Ascending aorta (tissue), 2 donors: ENCODE measurements at regions of chr9 and their contacts with region 1.

Region 1: GRCh38 chr9:17810728-17811571 is 232.1 kb downstream of the SH3GL2 start:
- DNase-seq: peak in 1 of 2 donors; percentile 68
- H3K4me3 ChIP-seq: no peak overlapping the region
- H3K27ac ChIP-seq: no peak overlapping the region
- H3K4me1 ChIP-seq: no peaks in the 10 kb centered on the region
- H3K27me3 ChIP-seq: no peaks in the 10 kb centered on the region
- CTCF ChIP-seq: peak; percentile 66 to 91 (median 88)

Region 2: GRCh38 chr9:17906176-17906840 is 95.4 kb after region 1 on chr9:
- intact Hi-C with region 1: loop called (anchors 5 kb)
- DNase-seq: peak in 1 of 2 donors; percentile 65
- H3K4me3 ChIP-seq: peak overlapping the region; percentile 62 to 78
- H3K27ac ChIP-seq: peak overlapping the region; percentile 88 to 95
- H3K4me1 ChIP-seq: peaks cover 4% of the 10 kb centered on the region in 2 donors
- H3K27me3 ChIP-seq: no peaks in the 10 kb centered on the region
- CTCF ChIP-seq: no peak

Region 3: DNA sequence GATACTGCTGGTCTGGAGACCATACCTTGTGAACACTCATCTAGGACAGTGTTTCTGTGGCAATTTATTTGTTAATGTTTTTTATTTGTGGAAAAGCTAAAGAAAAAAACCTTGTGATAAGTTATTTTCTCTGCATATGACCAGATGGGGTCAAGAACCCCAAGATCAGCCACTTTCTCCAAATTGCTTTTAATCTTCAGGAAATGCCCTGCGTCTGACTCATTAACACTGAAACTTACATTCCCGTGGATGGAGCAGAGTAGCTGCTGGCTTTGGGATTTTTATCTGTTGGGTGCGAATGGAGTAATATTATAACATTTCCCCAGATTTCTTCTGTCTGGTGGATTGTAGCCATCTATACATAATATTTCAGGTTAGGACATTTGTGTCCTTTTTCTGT is 212.4 kb after region 1 on chr9:
- intact Hi-C with region 1: loop called (anchors 10 kb)
- DNase-seq: no peak
- H3K4me3 ChIP-seq: no peak overlapping the region
- H3K27ac ChIP-seq: peak overlapping the region; percentile 41 to 44
- H3K4me1 ChIP-seq: peaks cover 0 to 2% of the 10 kb centered on the region in 2 donors
- H3K27me3 ChIP-seq: no peaks in the 10 kb centered on the region
- CTCF ChIP-seq: no peak

Region 4: DNA sequence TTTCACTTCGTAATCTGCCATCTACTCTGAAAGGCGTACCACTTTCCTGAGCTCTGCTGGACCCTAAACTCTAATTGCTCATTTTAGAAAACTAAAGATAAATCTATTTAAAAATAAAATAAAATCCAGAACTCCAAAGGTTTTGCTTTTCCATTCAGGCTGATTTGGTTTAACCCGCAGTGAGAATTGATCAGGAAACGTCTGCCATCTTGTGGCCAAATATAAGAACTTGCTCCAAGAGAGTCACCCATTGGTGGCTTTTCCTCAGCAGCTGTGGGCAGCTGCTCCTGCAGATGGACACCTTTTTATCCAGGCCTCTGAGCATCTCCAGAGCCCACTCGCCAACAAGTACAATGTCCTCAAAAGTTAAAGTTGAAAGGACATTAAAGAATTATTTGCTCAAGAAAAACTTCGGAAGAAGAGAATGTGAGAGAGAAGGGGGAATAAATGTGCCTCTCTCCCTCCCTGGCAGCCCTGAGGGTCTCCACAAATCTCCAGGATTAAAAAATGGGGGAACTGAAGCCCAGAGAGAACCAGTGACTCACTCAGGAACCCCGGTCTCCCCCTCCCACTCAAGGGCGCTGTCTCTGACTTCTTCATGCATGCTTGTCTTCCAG is 1218.0 kb after region 1 on chr9:
- intact Hi-C with region 1: loop called (anchors 2 kb)
- DNase-seq: no peak
- H3K4me3 ChIP-seq: no peak overlapping the region
- H3K27ac ChIP-seq: no peak overlapping the region
- H3K4me1 ChIP-seq: peaks cover 0 to 4% of the 10 kb centered on the region in 2 donors
- H3K27me3 ChIP-seq: no peaks in the 10 kb centered on the region
- CTCF ChIP-seq: peak; percentile 62 to 83 (median 64)